KBM-7 (cell line): ENCODE measurements at regions of chr3 and their contacts with region 1.

Region 1: GRCh38 chr3:108914774-108915641 is 38.7 kb downstream of the GUCA1C start:
- DNase-seq: peak; percentile 65

Region 2: GRCh38 chr3:108477511-108478147 is 437.4 kb before region 1 on chr3:
- in situ Hi-C with region 1: loop called (anchors 25 kb)
- DNase-seq: peak; percentile 70

Region 3: GRCh38 chr3:109336291-109336861 is 421.4 kb after region 1 on chr3:
- in situ Hi-C with region 1: no loop called
- DNase-seq: no peak

Region 4: GRCh38 chr3:109532257-109533216 is 617.5 kb after region 1 on chr3:
- in situ Hi-C with region 1: no loop called
- DNase-seq: peak; percentile 77